Activated T-helper 2 cell treated with anti-CD3 and anti-CD28 coated beads, Interferon-gamma antibody, Interleukin-2, Interleukin-4, amounts not matched to agents 10 μg/mL and 5 μg/mL and 100 μg/mL, durations not matched to agents 14 hours and 24 hours and 36 hours (primary cell): ENCODE measurements at regions of chr9 and their contacts with region 1.

Region 1: DNA sequence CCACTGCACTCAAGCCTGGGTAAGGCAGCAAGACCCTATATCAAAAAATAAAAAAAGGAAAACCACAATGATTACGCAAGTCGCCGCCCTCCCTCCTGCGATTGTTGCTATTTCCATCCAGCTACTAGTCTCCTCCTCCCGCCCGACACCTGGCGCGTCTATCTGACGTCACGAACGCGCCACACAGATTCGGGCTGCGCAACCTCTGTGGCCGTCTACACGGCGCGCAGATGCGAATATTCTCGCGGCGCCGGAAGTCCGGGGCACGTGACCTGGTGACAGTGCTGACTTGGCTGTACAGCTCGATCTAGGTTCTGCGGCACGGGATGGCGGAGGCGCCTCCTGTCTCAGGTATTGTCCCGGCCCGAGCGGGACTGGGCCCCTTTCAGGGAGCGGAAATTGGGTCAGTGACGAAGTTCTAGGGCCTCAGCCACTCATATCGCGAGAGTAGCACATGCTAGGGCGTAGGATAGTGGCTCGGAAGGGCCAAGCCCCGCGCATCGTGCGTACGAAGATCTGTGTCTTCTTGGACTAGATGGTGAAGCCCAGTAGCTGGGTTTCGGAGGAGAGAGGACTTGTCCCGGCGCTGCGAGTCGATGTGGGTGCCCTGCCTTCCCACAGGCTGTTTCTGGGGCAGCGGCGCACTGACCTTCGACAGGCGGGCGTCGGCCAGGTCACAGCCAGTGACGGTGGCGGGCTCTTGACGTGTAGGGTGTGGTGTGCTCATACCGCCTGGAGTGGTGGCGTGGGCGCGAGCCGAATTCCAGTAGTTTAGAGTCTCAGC is at the start of gene NFX1:
- DNase-seq: peak; percentile 98
- H3K4me3 Mint-ChIP-seq: peak within 1 kb of the TSS; percentile 96
- H3K27ac Mint-ChIP-seq: peak within 1 kb of the TSS; percentile 100
- H3K4me1 Mint-ChIP-seq: peaks cover 45% of the 10 kb centered on the region
- H3K27me3 Mint-ChIP-seq: peaks cover 2% of the 10 kb centered on the region
- total RNA-seq, gene NFX1: 36.9 and 37.2 TPM in 2 replicates

Region 2: DNA sequence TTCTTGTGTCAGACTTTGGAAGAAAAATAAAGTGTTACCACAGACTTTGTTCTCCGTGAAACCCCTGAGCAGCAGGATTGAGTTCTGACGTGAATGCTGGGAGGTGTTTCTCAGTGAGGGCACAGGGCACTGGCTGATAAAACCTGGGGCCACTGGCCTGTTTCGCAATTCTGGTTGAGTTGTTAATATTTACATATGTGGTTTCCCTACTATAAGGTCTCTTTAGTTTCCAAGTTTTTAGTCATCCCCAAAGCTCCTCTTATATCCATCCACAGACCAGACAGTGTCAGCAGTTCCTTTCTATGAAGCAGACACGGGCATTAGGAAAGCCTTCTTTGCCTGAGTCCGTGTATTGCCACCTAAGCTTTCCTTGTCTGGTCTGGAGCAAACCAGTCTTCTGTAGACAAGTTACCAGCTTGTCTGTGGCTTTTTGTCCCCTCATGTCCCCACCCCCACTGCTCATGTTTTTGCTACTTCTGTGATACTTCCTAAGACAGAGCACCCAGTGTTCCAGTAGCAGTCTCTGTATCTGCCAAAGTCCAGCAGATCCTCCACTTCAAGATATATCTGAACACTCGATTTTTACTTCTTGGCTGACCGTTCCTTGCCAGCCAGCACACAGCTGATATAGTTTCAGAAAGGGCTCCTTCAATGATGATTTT is 864.0 kb before region 1 on chr9:
- intact Hi-C with region 1: no loop called
- DNase-seq: no peak
- H3K4me3 Mint-ChIP-seq: no peak overlapping the region
- H3K27ac Mint-ChIP-seq: no peak overlapping the region
- H3K4me1 Mint-ChIP-seq: peaks cover 4% of the 10 kb centered on the region
- H3K27me3 Mint-ChIP-seq: no peaks in the 10 kb centered on the region

Region 3: DNA sequence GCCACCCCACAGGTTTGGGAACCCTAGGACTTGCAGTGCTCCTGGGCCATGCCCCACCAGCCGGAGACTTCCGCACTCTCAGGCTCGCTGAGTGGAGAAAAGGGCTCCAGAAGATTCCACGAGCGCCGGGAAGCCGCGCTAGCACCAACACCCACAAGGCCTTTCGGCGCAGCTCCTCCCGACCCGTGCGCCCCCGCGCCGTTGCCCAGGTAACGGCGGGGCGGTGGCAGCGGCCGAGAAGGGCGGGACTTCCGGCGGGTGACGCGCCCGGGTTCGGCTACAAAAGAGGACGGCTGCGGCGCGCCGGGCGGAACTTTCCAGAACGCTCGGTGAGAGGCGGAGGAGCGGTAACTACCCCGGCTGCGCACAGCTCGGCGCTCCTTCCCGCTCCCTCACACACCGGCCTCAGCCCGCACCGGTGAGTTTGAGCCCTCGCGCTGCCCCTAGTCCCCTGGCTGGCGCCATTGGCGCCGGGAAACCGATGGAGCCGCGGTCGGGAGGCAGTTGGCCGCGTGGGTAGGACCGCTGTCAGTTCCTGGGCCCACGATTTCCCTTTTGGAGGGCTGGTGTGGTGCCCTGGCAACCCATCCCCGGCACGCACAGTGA is 265.4 kb before region 1 on chr9 and contains the start of gene DNAJA1:
- intact Hi-C with region 1: loop called (anchors 1 kb)
- DNase-seq: peak; percentile 93
- H3K4me3 Mint-ChIP-seq: peak within 1 kb of the TSS; percentile 90
- H3K27ac Mint-ChIP-seq: peak within 1 kb of the TSS; percentile 96
- H3K4me1 Mint-ChIP-seq: peaks cover 53% of the 10 kb centered on the region
- H3K27me3 Mint-ChIP-seq: no peaks in the 10 kb centered on the region
- total RNA-seq, gene DNAJA1: 257 and 259 TPM in 2 replicates

Region 4: GRCh38 chr9:33225319-33226149 is 64.9 kb before region 1 on chr9:
- intact Hi-C with region 1: no loop called
- DNase-seq: peak; percentile 50
- H3K4me3 Mint-ChIP-seq: no peak overlapping the region
- H3K27ac Mint-ChIP-seq: peak overlapping the region; percentile 2
- H3K4me1 Mint-ChIP-seq: peaks cover 33% of the 10 kb centered on the region
- H3K27me3 Mint-ChIP-seq: no peaks in the 10 kb centered on the region

Region 5: DNA sequence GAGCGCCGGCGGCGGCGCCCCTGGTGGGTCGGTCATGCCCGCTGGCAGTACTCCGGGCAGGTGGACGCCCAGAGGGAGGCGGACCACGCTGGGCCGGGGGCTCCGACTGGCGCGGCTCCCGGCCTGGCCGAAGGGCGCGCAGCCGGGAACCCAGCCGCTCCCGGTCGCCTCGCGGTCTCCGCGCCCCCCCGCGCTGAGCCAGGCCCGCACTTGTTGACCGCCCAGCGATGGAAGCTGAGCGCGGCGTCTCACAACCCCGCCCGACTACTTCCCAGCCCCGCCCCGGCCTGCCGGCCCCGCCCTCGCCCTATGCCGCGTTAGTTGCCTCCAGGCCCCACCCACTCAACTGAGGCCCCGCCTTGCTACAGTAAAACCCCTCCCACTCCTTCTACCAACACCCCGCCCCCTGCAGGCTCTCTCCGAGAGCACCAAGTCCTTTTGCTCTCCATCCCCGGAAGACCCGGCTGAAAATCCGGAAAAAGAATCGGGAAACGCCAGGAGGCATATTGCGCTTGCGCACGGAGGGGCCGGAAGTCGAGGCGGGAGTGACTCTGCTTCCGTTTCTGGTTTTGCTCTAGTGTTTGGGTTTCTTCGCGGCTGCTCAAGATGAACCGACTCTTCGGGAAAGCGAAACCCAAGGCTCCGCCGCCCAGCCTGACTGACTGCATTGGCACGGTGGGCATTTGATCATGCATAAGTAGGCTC is 25.8 kb before region 1 on chr9 and contains the starts of genes BAG1 and CHMP5:
- intact Hi-C with region 1: loop called (anchors 1 kb)
- DNase-seq: peak; percentile 100
- H3K4me3 Mint-ChIP-seq: peak within 1 kb of the TSS; percentile 98
- H3K27ac Mint-ChIP-seq: peak within 1 kb of the TSS; percentile 96
- H3K4me1 Mint-ChIP-seq: peaks cover 43% of the 10 kb centered on the region
- H3K27me3 Mint-ChIP-seq: no peaks in the 10 kb centered on the region
- total RNA-seq, gene BAG1: 62.0 and 68.9 TPM in 2 replicates
- total RNA-seq, gene CHMP5: 54.5 and 57.6 TPM in 2 replicates

Region 6: DNA sequence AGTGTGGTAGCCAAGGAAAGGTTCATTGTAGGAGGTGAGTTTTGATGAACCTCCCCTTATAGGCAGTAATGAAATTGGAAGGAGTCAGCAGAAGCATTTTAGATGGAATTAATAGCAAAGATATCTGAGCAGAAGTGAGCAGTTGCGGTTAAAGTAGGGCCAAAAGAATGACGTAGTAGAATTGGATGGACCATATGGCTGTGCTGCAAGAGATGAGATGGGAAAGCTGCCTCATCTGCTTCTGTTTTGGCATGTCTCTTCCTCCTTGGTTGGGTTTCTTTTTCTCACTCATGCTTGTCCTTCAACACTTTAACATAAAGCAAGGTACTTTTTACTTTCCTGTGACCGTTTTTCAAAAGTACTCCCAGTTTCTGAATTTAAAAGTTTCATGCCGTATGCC is 56.1 kb after region 1 on chr9:
- intact Hi-C with region 1: loop called (anchors 2 kb)
- DNase-seq: no peak
- H3K4me3 Mint-ChIP-seq: no peak overlapping the region
- H3K27ac Mint-ChIP-seq: peak overlapping the region; percentile 6
- H3K4me1 Mint-ChIP-seq: peaks cover 7% of the 10 kb centered on the region
- H3K27me3 Mint-ChIP-seq: no peaks in the 10 kb centered on the region

Region 7: DNA sequence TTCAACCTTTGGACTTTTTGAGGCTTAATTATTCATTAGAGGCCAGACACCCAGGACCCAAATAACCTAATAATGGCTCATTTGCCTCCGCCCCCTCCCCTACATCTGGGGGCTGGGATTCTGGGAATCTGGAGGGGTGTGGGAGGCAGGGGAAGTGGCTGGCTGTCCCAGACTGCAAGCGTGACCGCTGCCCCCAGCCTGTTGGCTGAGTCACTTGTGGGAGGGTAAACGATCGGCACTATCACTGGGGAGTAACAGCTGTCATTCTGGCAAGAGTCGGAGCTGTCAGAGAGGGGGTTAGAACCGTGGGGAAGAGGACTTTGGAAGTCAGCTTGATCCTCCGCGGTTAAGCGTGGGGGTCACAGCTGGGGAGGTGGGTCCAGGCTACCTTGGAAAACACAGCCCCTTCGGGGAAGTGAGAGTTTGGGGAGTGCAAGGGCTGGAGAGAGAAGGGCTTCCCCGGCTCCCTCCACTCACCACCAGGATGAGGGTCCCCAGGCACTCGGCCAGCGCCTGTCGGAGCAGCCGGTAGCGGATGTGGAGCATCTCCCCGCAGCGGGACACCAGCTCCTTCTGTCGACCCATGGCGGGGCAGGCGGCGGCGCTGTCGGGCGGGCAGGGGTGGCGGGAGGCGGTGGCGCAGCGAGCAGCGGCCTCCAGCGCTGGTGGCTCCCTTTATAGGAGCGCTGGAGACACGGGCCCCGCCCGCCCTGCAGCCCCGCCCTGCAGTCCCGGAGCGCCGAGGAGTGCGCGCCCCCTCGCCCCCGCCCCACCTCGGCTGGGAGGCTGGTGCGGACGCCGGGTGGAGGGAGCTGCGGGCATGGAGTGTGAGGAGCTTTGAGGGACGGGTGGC is 156.7 kb after region 1 on chr9 and contains the start of gene AQP3:
- intact Hi-C with region 1: loop called (anchors 2 kb)
- DNase-seq: peak; percentile 75
- H3K4me3 Mint-ChIP-seq: peak within 1 kb of the TSS; percentile 81
- H3K27ac Mint-ChIP-seq: peak within 1 kb of the TSS; percentile 79
- H3K4me1 Mint-ChIP-seq: peaks cover 26% of the 10 kb centered on the region
- H3K27me3 Mint-ChIP-seq: no peaks in the 10 kb centered on the region
- total RNA-seq, gene AQP3: 2.1 TPM in 2 replicates

Region 8: DNA sequence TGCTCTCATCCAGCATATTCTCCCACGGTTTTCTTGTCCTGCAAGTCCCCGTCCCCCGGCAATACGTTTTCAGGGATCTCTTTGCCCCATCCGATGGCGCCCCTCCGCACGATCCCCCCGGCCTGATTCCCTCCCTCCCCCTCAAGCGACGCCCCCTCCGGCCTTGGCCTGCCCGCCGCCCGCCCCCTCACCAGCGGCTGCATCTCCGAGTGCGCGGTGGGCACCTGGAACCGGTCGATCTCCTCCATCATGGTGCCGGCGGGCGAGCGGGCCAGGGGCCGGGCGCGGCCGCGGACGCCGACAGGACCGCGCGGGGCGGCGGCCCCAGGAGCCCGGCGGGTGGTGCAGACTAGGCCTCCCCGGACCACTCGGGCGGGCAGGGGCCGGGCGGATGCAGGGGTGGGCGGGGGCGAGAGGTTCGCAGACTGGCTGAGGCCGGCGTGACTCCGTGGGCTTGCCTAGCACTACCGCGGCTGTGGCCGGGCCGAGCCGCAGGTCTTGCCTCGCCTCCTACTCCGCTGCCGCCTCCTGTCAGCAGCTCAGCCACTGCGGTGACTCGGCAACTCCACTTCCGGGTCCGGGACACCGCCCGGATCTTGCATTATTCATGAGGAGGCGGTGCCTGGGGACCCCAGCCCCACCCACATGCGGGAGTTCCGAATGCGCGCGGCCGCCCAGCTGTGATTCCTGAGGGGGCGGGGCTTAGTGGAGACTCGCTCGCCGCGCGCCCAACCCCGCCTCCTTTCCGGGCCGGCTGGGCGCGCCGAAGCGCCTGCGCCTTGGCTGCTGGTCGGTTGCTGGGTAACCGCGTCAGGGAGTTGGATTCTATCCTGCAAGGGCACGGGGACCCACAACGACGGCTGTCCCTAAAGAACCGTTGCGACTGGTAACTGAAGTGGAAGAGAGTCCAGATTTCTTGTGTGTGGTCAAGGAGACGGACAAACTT is 1167.8 kb after region 1 on chr9 and contains the starts of genes DNAI1 and FAM219A:
- intact Hi-C with region 1: loop called (anchors 10 kb)
- DNase-seq: peak; percentile 99
- H3K4me3 Mint-ChIP-seq: peak within 1 kb of the TSS; percentile 88
- H3K27ac Mint-ChIP-seq: peak within 1 kb of the TSS; percentile 60
- H3K4me1 Mint-ChIP-seq: peaks cover 43% of the 10 kb centered on the region
- H3K27me3 Mint-ChIP-seq: peaks cover 17% of the 10 kb centered on the region
- total RNA-seq, gene DNAI1: not detected in 2 replicates
- total RNA-seq, gene FAM219A: 17.3 and 19.7 TPM in 2 replicates